ENCODE measurements at regions of chr20 and their contacts with region 1.

Region 1: GRCh38 chr20:5126512-5127203 is at the start of gene CDS2:
- DNase-seq: peak; percentile 98
- ATAC-seq: peak; percentile 93
- H3K4me3 ChIP-seq: peak within 1 kb of the TSS; percentile 88
- H3K27ac ChIP-seq: peak within 1 kb of the TSS; percentile 87
- H3K4me1 ChIP-seq: peaks cover 16% of the 10 kb centered on the region
- H3K27me3 ChIP-seq: no peaks in the 10 kb centered on the region
- CTCF ChIP-seq: peak; percentile 61 to 80 (median 62); a peak in 5 of 6 replicates
- EP300 ChIP-seq: no peak
- POLR2A ChIP-seq: peak; percentile 69
- RAD21 ChIP-seq: peak; percentile 80
- polyA plus RNA-seq, gene CDS2: 11.5 to 15.4 TPM

Region 2: GRCh38 chr20:4813863-4814695 is 312.6 kb before region 1 on chr20:
- CTCF ChIA-PET with region 1: interaction called, 7 read pairs
- POLR2A ChIA-PET with region 1: interaction called, 9 read pairs
- RAD21 ChIA-PET with region 1: interaction called, 11 read pairs
- SMC1A ChIA-PET with region 1: interaction called, 4 read pairs
- in situ Hi-C with region 1: no loop called
- intact Hi-C with region 1: loop called (anchors 5 kb)
- DNase-seq: peak; percentile 91
- ATAC-seq: peak; percentile 63
- H3K4me3 ChIP-seq: peak overlapping the region; percentile 71
- H3K27ac ChIP-seq: peak overlapping the region; percentile 98
- H3K4me1 ChIP-seq: peaks cover 66% of the 10 kb centered on the region
- H3K27me3 ChIP-seq: no peaks in the 10 kb centered on the region
- CTCF ChIP-seq: peak in 2 of 3 experiments; percentile 1 to 10; a peak in 1 of 6 replicates
- EP300 ChIP-seq: peak in 1 of 2 experiments; percentile 62; a peak in 2 of 4 replicates
- POLR2A ChIP-seq: no peak; the same call in 1 of the 2 replicates
- RAD21 ChIP-seq: no peak

Region 3: GRCh38 chr20:4886771-4887527 is 239.7 kb before region 1 on chr20:
- CTCF ChIA-PET with region 1: no interaction called
- POLR2A ChIA-PET with region 1: no interaction called
- RAD21 ChIA-PET with region 1: no interaction called
- SMC1A ChIA-PET with region 1: no interaction called
- in situ Hi-C with region 1: no loop called
- intact Hi-C with region 1: no loop called
- DNase-seq: no peak
- ATAC-seq: no peak
- H3K4me3 ChIP-seq: no peak overlapping the region
- H3K27ac ChIP-seq: no peak overlapping the region
- H3K4me1 ChIP-seq: no peaks in the 10 kb centered on the region
- H3K27me3 ChIP-seq: no peaks in the 10 kb centered on the region
- CTCF ChIP-seq: no peak
- EP300 ChIP-seq: no peak
- POLR2A ChIP-seq: no peak
- RAD21 ChIP-seq: no peak

Region 4: DNA sequence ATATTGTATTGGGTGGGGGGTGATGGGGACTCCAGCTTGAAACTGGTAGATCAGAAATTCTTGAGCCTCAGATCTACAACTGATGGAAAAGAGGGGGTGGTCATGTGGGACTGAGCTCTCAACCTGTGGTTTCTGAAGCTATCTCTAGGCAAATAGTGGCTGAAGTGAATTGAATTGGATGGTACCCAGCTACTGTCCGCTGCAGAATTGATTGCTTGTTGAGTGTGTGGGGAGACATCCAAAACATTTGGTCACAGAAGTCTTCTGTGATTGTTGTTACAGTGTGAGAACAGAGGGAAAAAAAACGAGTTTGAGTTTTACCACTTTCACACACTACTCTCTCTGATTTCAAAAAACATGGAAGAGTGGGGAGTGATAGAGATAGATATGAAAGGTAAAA is 15.0 kb after region 1 on chr20:
- CTCF ChIA-PET with region 1: interaction called, 20 read pairs
- POLR2A ChIA-PET with region 1: interaction called, 7 read pairs
- RAD21 ChIA-PET with region 1: interaction called, 22 read pairs
- SMC1A ChIA-PET with region 1: interaction called, 10 read pairs
- in situ Hi-C with region 1: no loop called
- intact Hi-C with region 1: no loop called
- DNase-seq: no peak
- ATAC-seq: no peak
- H3K4me3 ChIP-seq: no peak overlapping the region
- H3K27ac ChIP-seq: no peak overlapping the region
- H3K4me1 ChIP-seq: peaks cover 30% of the 10 kb centered on the region
- H3K27me3 ChIP-seq: no peaks in the 10 kb centered on the region
- CTCF ChIP-seq: no peak
- EP300 ChIP-seq: no peak
- POLR2A ChIP-seq: no peak
- RAD21 ChIP-seq: no peak

Region 5: DNA sequence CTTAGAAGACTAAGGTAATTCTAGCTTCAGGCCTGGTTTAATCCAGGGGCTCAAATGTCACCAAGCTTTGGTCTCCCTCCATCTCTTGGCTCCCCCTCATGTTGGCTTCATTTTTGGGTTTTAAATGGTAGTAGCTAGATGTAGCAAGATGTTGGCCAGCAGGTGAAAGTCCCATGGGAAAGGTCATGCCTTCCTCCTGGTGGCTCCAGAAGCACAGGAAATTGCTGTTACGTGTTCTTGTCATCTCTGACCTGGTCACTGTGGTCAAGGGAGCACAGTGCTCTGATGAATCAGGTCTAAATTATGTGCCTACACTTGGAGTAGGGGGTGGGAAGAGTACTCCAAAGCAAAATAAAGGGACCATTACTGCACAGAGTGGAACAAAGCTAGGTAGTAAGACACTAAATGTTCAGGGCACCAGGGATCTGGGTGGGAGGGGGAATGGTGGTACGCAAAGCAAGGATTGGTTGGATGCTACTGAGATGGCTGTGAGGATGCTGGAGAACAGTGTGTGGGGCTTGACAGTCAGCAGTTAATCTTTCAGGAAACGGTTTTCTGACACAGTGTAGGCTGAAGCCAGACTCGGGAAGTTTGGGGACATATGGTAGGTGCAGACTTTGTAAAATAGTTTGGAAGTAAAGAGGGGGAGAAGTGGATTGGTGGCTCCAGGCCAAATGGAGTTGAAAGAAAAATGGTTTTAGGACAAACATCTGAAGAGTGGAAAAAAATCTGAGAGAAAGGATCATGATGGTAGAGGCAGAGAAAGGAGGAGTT is 30.2 kb after region 1 on chr20:
- CTCF ChIA-PET with region 1: interaction called, 5 read pairs
- POLR2A ChIA-PET with region 1: interaction called, 3 read pairs
- RAD21 ChIA-PET with region 1: interaction called, 11 read pairs
- SMC1A ChIA-PET with region 1: interaction called, 5 read pairs
- in situ Hi-C with region 1: no loop called
- intact Hi-C with region 1: no loop called
- DNase-seq: no peak
- ATAC-seq: no peak
- H3K4me3 ChIP-seq: no peak overlapping the region
- H3K27ac ChIP-seq: no peak overlapping the region
- H3K4me1 ChIP-seq: peaks cover 2% of the 10 kb centered on the region; the same call in 1 of the 2 replicates
- H3K27me3 ChIP-seq: no peaks in the 10 kb centered on the region
- CTCF ChIP-seq: no peak
- EP300 ChIP-seq: no peak
- POLR2A ChIP-seq: no peak
- RAD21 ChIP-seq: no peak

Region 6: DNA sequence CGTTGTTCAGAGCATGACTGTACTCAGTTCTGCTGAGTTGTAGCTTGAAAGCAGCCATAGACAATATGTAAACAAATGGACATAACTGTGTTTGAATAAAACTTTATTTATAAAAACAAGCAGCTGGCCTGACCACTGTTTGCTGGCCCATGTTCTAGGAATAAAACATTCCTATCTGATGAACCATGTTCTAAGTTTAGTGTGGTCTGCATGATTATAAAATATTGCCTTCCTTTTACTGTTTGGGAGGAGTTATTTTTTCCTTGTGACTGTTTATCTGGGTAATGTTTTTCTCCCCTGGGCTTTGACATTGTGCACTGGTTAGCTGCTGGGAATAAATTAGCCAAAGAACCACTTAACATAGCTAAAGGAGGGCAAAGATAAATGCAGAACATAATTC is 55.3 kb after region 1 on chr20:
- CTCF ChIA-PET with region 1: interaction called, 45 read pairs
- POLR2A ChIA-PET with region 1: interaction called, 6 read pairs
- RAD21 ChIA-PET with region 1: interaction called, 25 read pairs
- SMC1A ChIA-PET with region 1: interaction called, 229 read pairs
- in situ Hi-C with region 1: loop called (anchors 5 kb)
- intact Hi-C with region 1: no loop called
- DNase-seq: no peak
- ATAC-seq: no peak
- H3K4me3 ChIP-seq: no peak overlapping the region
- H3K27ac ChIP-seq: no peak overlapping the region
- H3K4me1 ChIP-seq: no peaks in the 10 kb centered on the region
- H3K27me3 ChIP-seq: no peaks in the 10 kb centered on the region
- CTCF ChIP-seq: no peak
- EP300 ChIP-seq: no peak
- POLR2A ChIP-seq: no peak
- RAD21 ChIP-seq: no peak

Region 7: DNA sequence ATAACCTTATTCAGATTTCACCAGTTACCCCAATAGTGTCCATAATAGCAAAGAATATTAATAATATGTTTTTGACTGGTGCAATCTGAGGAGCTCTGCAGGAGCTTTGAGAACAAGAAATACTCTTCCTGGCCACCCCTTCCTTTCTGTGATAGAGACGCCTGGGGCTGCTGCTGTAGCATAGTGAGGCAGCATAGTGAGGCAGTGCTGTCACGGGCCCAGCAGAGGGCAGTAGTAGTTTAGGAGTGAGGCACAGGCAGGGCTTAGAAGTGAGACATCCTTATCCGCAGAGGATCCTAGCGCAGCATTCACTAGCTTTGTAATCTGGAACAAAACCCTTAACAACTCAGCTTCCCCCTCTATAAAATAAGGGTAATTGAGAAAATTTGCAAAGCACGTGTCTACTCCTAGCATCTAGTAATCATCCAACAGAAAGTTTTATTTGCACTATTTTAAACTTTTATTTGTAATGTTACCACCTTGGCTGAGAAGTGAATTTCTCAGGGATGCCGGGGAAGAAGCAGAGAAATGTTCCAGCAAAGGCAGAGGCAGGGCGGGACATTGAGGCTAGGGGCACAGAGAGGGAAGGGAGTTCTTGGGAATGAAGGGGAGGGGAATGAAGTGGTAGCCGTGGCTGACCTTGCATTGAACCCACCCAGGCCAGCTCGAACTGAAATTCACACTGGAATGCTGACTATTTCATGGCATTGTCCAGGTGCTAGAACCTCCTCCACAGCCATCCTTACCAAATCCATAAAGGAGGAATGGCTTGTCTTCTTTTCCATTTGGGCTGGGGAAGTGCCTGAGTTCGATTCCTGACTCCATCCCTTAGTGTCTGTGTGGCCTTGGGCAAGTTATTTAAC is 78.9 kb after region 1 on chr20:
- CTCF ChIA-PET with region 1: interaction called, 34 read pairs
- POLR2A ChIA-PET with region 1: no interaction called
- RAD21 ChIA-PET with region 1: interaction called, 10 read pairs
- SMC1A ChIA-PET with region 1: interaction called, 6 read pairs
- in situ Hi-C with region 1: no loop called
- intact Hi-C with region 1: no loop called
- DNase-seq: no peak
- ATAC-seq: peak; percentile 100
- H3K4me3 ChIP-seq: no peak overlapping the region
- H3K27ac ChIP-seq: no peak overlapping the region
- H3K4me1 ChIP-seq: no peaks in the 10 kb centered on the region
- H3K27me3 ChIP-seq: no peaks in the 10 kb centered on the region
- CTCF ChIP-seq: peak; percentile 88 to 89 (median 89)
- EP300 ChIP-seq: no peak
- POLR2A ChIP-seq: no peak
- RAD21 ChIP-seq: peak; percentile 76

Region 8: DNA sequence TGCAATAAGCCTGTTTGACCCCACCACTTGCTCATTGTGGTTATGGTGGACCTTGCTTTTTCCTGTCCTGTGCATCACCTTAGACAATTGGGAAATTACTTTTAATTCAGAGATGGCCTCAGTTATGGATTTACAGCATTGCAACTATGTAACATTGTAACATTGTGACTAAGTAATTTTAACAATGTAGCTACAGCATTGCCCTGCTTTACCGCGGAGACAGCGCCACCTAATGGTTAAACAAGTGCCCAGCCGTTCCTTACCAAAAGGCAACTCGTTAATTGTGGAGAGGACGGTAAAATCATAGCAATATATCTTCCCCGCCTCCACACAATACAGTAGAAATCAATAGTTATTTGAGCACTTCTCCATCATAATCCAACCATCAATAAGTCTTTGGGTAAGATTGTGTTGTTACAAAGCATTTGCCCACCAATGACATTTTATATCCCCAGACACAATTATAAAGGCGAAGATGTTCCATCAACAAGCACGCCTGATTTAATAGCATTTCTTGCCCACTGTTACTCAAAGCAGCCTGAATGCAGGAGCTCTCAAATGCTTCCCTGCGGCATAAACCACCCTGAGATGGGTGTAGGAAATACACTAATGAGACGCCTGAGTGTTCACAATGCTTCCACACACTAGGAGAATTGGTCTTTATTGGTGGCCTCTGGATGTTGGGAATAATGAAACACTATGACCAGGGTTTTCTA is 96.4 kb after region 1 on chr20:
- CTCF ChIA-PET with region 1: interaction called, 88 read pairs
- POLR2A ChIA-PET with region 1: interaction called, 4 read pairs
- RAD21 ChIA-PET with region 1: interaction called, 70 read pairs
- SMC1A ChIA-PET with region 1: interaction called, 35 read pairs
- in situ Hi-C with region 1: no loop called
- intact Hi-C with region 1: loop called (anchors 1 kb)
- DNase-seq: peak; percentile 13
- ATAC-seq: peak; percentile 92
- H3K4me3 ChIP-seq: no peak overlapping the region
- H3K27ac ChIP-seq: no peak overlapping the region
- H3K4me1 ChIP-seq: no peaks in the 10 kb centered on the region
- H3K27me3 ChIP-seq: no peaks in the 10 kb centered on the region
- CTCF ChIP-seq: peak; percentile 75 to 94 (median 91)
- EP300 ChIP-seq: no peak
- POLR2A ChIP-seq: no peak
- RAD21 ChIP-seq: peak; percentile 75

Region 9: DNA sequence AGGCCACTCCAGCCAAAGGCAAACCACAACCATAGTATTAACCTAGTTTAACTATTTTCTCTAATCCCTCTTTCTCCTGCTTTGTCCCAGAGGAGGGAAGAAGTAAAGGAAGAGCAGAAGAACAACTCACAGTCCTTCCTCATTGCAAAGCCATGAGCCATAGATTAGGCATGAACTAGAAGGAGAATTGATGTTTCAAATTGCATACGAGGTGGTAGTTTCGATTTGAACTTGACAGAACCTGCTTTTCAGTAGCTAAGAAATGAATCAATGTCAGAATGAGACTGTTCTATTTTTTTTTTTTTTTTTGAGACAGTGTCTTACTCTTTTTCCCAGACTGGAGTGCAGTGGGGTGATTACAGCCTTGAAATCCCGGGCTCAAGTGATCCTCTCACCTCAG is 141.8 kb after region 1 on chr20:
- CTCF ChIA-PET with region 1: no interaction called
- POLR2A ChIA-PET with region 1: no interaction called
- RAD21 ChIA-PET with region 1: no interaction called
- SMC1A ChIA-PET with region 1: no interaction called
- in situ Hi-C with region 1: no loop called
- intact Hi-C with region 1: no loop called
- DNase-seq: no peak
- ATAC-seq: peak; percentile 36; the same call in 2 of the 3 replicates
- H3K4me3 ChIP-seq: no peak overlapping the region
- H3K27ac ChIP-seq: no peak overlapping the region
- H3K4me1 ChIP-seq: no peaks in the 10 kb centered on the region
- H3K27me3 ChIP-seq: peaks cover 0 to 2% of the 10 kb centered on the region in 2 experiments; a peak in 1 of 4 replicates
- CTCF ChIP-seq: no peak
- EP300 ChIP-seq: no peak
- POLR2A ChIP-seq: no peak
- RAD21 ChIP-seq: no peak

Measured in GM12878 (cell line).